Sigmoid colon (tissue), 7 donors: ENCODE measurements at regions of chr3 and their contacts with region 1.

Region 1: GRCh38 chr3:135918580-135918962 is 47.0 kb upstream of the PPP2R3A start:
- DNase-seq: no peak
- H3K4me3 ChIP-seq: no peak overlapping the region
- H3K27ac ChIP-seq: no peak overlapping the region
- H3K4me1 ChIP-seq: no peaks in the 10 kb centered on the region
- H3K27me3 ChIP-seq: no peaks in the 10 kb centered on the region
- CTCF ChIP-seq: peak; percentile 39 to 50 (median 44)
- EP300 ChIP-seq: no peak
- POLR2A ChIP-seq: no peak

Region 2: GRCh38 chr3:136042608-136043221 is 124.1 kb after region 1 on chr3:
- intact Hi-C with region 1: loop called (anchors 2 kb)
- DNase-seq: no peak
- H3K4me3 ChIP-seq: no peak overlapping the region
- H3K27ac ChIP-seq: no peak overlapping the region
- H3K4me1 ChIP-seq: no peaks in the 10 kb centered on the region
- H3K27me3 ChIP-seq: no peaks in the 10 kb centered on the region
- CTCF ChIP-seq: peak; percentile 33 to 60 (median 41)
- EP300 ChIP-seq: no peak
- POLR2A ChIP-seq: no peak